ENCODE measurements at regions of chr3 and their contacts with region 1.

Region 1: GRCh38 chr3:59566481-59566975 is 516.7 kb upstream of the CFAP20DC start:
- DNase-seq: peak; percentile 68
- ATAC-seq: peak; percentile 98
- H3K4me3 ChIP-seq: no peak overlapping the region
- H3K27ac ChIP-seq: peak overlapping the region; percentile 54
- H3K4me1 ChIP-seq: peaks cover 32% of the 10 kb centered on the region
- H3K27me3 ChIP-seq: no peaks in the 10 kb centered on the region
- CTCF ChIP-seq: no peak
- EP300 ChIP-seq: peak; percentile 87 to 93; a peak in 3 of 4 replicates
- POLR2A ChIP-seq: no peak
- RAD21 ChIP-seq: no peak

Region 2: DNA sequence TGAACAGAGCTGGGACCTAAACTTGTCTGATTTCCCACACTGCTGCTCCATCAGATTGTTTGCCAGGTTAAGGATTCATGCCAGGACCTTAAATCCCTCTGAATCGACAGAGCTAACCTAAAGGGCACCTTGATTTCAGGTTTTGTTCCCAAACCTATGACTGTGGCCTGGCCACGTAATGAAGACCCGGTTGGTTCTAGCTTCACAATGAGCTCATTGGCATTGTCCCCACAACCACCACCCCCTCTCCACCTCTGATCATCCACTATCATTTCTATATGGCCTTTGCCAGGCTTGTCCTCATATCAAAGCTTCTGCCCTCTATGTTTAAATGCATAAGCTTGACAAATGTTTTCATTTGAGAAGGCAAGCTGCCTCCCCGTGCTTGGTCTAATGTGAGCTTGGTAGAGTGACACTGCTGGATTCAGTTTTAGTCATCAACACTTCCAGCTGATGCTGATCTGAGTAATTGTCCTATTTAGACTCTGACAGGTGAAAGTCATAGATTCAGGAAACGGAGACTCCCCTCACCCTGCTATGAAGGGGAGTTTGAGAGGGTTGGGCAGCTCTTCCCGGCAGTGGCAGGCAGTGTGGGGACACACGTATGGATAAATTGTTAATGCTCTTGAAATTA is 109.6 kb before region 1 on chr3:
- CTCF ChIA-PET with region 1: interaction called, 8 read pairs
- POLR2A ChIA-PET with region 1: interaction called, 6 read pairs
- RAD21 ChIA-PET with region 1: interaction called, 41 read pairs
- SMC1A ChIA-PET with region 1: interaction called, 44 read pairs
- in situ Hi-C with region 1: no loop called
- intact Hi-C with region 1: no loop called
- DNase-seq: peak; percentile 67
- ATAC-seq: peak; percentile 93
- H3K4me3 ChIP-seq: no peak overlapping the region
- H3K27ac ChIP-seq: peak overlapping the region; percentile 71
- H3K4me1 ChIP-seq: peaks cover 23% of the 10 kb centered on the region
- H3K27me3 ChIP-seq: no peaks in the 10 kb centered on the region
- CTCF ChIP-seq: no peak
- EP300 ChIP-seq: peak; percentile 70 to 88; a peak in 3 of 4 replicates
- POLR2A ChIP-seq: no peak
- RAD21 ChIP-seq: peak; percentile 33; the same call in 1 of the 2 replicates

Region 3: GRCh38 chr3:59480486-59480995 is 86.0 kb before region 1 on chr3:
- CTCF ChIA-PET with region 1: no interaction called
- POLR2A ChIA-PET with region 1: no interaction called
- RAD21 ChIA-PET with region 1: no interaction called
- SMC1A ChIA-PET with region 1: interaction called, 16 read pairs
- in situ Hi-C with region 1: no loop called
- intact Hi-C with region 1: loop called (anchors 2 kb)
- DNase-seq: peak; percentile 49
- ATAC-seq: peak; percentile 92
- H3K4me3 ChIP-seq: no peak overlapping the region; the same call in 1 of the 2 replicates
- H3K27ac ChIP-seq: peak overlapping the region; percentile 71
- H3K4me1 ChIP-seq: peaks cover 15% of the 10 kb centered on the region
- H3K27me3 ChIP-seq: no peaks in the 10 kb centered on the region
- CTCF ChIP-seq: 0 out of 6 replicates have a peak, but pooled peaks of 1 of the 3 experiments have one; percentile 12
- EP300 ChIP-seq: peak; percentile 39 to 56; a peak in 2 of 4 replicates
- POLR2A ChIP-seq: no peak
- RAD21 ChIP-seq: peak; percentile 48

Region 4: GRCh38 chr3:59540696-59541095 is 25.8 kb before region 1 on chr3:
- CTCF ChIA-PET with region 1: no interaction called
- POLR2A ChIA-PET with region 1: interaction called, 4 read pairs
- RAD21 ChIA-PET with region 1: no interaction called
- SMC1A ChIA-PET with region 1: interaction called, 38 read pairs
- in situ Hi-C with region 1: no loop called
- intact Hi-C with region 1: loop called (anchors 2 kb)
- DNase-seq: peak; percentile 60
- ATAC-seq: peak; percentile 97
- H3K4me3 ChIP-seq: no peak overlapping the region
- H3K27ac ChIP-seq: no peak overlapping the region
- H3K4me1 ChIP-seq: no peaks in the 10 kb centered on the region
- H3K27me3 ChIP-seq: no peaks in the 10 kb centered on the region
- CTCF ChIP-seq: no peak
- EP300 ChIP-seq: peak; percentile 51 to 65; a peak in 2 of 4 replicates
- POLR2A ChIP-seq: no peak
- RAD21 ChIP-seq: no peak

Region 5: GRCh38 chr3:59601486-59601885 is 35.0 kb after region 1 on chr3:
- CTCF ChIA-PET with region 1: no interaction called
- POLR2A ChIA-PET with region 1: no interaction called
- RAD21 ChIA-PET with region 1: no interaction called
- SMC1A ChIA-PET with region 1: no interaction called
- in situ Hi-C with region 1: no loop called
- intact Hi-C with region 1: no loop called
- DNase-seq: no peak
- ATAC-seq: no peak
- H3K4me3 ChIP-seq: no peak overlapping the region
- H3K27ac ChIP-seq: no peak overlapping the region
- H3K4me1 ChIP-seq: no peaks in the 10 kb centered on the region
- H3K27me3 ChIP-seq: no peaks in the 10 kb centered on the region; a peak in 1 of 4 replicates
- CTCF ChIP-seq: no peak
- EP300 ChIP-seq: no peak
- POLR2A ChIP-seq: no peak
- RAD21 ChIP-seq: no peak

Region 6: DNA sequence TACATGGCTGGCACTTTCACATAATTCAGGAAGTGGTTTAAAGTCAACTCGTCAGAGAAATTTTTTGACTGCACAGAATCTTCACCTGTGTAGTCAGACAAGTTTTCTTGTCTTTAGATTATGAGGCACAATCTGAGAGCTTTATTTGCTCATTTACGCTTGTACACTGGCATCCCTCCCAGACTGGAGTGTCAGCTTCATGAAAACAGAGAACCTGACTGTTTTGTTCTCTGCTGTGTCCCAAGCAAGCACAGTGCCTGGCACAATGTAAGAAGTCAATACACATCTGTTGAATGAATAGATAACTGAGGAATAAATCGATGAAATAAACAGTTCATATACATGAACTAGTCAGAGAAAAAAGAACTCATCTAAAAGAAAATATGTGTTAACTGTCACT is 329.4 kb after region 1 on chr3:
- CTCF ChIA-PET with region 1: no interaction called
- POLR2A ChIA-PET with region 1: no interaction called
- RAD21 ChIA-PET with region 1: no interaction called
- SMC1A ChIA-PET with region 1: no interaction called
- in situ Hi-C with region 1: no loop called
- intact Hi-C with region 1: no loop called
- DNase-seq: no peak
- ATAC-seq: no peak
- H3K4me3 ChIP-seq: no peak overlapping the region
- H3K27ac ChIP-seq: no peak overlapping the region
- H3K4me1 ChIP-seq: no peaks in the 10 kb centered on the region
- H3K27me3 ChIP-seq: no peaks in the 10 kb centered on the region
- CTCF ChIP-seq: no peak
- EP300 ChIP-seq: no peak
- POLR2A ChIP-seq: no peak
- RAD21 ChIP-seq: no peak